ENCODE measurements at regions of chr5 and their contacts with region 1.

Region 1: GRCh38 chr5:171342362-171343111 is 33.5 kb downstream of the TLX3 start:
- DNase-seq: peak; percentile 24
- ATAC-seq: peak; percentile 94
- H3K4me3 ChIP-seq: no peak overlapping the region
- H3K27ac ChIP-seq: no peak overlapping the region
- H3K4me1 ChIP-seq: no peaks in the 10 kb centered on the region
- H3K27me3 ChIP-seq: peaks cover 4% of the 10 kb centered on the region; the same call in 1 of the 2 replicates
- CTCF ChIP-seq: peak; percentile 85

Region 2: DNA sequence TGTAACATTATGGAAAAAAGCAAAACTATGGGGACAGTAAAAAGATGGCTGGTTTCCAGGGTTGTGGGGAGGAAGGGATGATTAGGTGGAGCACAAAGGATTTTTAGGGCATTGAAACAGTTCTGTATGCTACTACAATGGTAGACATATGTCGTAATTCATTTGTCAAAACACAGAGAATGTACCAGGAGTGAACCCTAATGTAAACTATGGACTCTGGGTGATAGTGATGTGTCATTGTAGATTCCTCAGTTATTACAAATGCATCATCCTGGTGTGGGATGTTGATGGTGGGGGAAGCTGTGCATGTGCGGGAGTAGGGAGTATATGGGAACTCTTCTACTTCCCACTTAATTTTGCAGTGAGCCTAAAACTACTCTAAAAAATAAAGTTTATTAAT is 694.0 kb before region 1 on chr5:
- CTCF ChIA-PET with region 1: no interaction called
- POLR2A ChIA-PET with region 1: no interaction called
- in situ Hi-C with region 1: no loop called
- intact Hi-C with region 1: loop called (anchors 10 kb)
- DNase-seq: no peak
- ATAC-seq: no peak
- H3K4me3 ChIP-seq: no peak overlapping the region
- H3K27ac ChIP-seq: no peak overlapping the region
- H3K4me1 ChIP-seq: no peaks in the 10 kb centered on the region
- H3K27me3 ChIP-seq: peaks cover 2% of the 10 kb centered on the region
- CTCF ChIP-seq: no peak

Region 3: GRCh38 chr5:171207256-171207847 is 135.2 kb before region 1 on chr5:
- CTCF ChIA-PET with region 1: interaction called, 19 read pairs
- POLR2A ChIA-PET with region 1: no interaction called
- in situ Hi-C with region 1: no loop called
- intact Hi-C with region 1: loop called (anchors 1 kb)
- DNase-seq: peak; percentile 20
- ATAC-seq: 0 out of 2 replicates have a peak, but pooled peaks have one; percentile 70
- H3K4me3 ChIP-seq: no peak overlapping the region
- H3K27ac ChIP-seq: no peak overlapping the region
- H3K4me1 ChIP-seq: no peaks in the 10 kb centered on the region
- H3K27me3 ChIP-seq: peaks cover 7% of the 10 kb centered on the region; the same call in 1 of the 2 replicates
- CTCF ChIP-seq: peak; percentile 73

Region 4: DNA sequence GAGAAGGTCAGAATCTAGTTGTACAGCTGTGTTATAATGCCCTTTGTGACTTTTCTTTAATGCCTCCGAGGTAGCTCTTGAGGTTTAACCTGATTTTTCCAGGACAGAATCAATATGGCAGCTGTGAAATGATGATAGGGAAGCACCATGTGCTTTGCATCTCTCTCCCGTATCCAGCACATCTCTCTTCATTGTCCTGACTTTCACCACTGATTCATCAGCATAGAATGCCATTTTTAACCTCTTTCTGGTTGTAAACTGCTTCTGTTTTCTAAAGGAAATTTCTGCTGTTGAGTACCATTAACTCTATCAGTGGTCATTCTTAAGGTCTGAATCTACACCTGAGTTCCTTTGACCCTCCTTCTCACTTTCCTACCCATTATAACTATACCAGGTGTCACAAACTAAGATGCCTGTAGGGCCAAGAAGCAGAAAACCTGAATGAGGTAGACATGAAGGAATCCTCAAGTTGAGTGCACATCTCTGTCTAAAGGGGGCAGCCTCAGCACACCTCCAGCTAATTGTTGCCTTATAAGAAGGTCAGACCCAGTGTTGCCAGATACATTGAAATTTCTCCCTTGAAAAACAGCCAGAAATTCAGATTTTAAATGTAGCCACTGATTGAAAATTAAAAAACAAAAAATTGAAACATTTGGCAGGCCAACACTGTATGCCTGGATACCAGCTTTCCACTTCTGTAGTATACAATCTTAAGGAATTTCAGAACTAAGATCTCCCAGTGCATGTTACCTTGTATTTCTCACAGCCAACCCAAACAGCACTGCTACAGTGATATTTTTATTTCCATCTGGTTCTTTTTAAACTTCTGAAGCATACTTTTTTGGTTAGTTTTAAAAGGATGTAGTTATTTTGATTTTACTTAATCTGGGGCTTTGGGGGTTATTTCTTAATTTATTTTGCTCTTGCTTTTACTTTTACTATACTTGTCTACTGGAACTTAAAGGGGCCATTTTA is 69.3 kb before region 1 on chr5:
- CTCF ChIA-PET with region 1: interaction called, 4 read pairs
- POLR2A ChIA-PET with region 1: no interaction called
- in situ Hi-C with region 1: no loop called
- intact Hi-C with region 1: loop called (anchors 1 kb)
- DNase-seq: no peak
- ATAC-seq: peak; percentile 87
- H3K4me3 ChIP-seq: no peak overlapping the region
- H3K27ac ChIP-seq: no peak overlapping the region
- H3K4me1 ChIP-seq: no peaks in the 10 kb centered on the region
- H3K27me3 ChIP-seq: no peaks in the 10 kb centered on the region; the same call in none of the 2 replicates
- CTCF ChIP-seq: peak; percentile 74